Activated T-helper 2 cell treated with anti-CD3 and anti-CD28 coated beads, Interferon-gamma antibody, Interleukin-2, Interleukin-4, amounts not matched to agents 10 μg/mL and 5 μg/mL and 100 μg/mL, durations not matched to agents 14 hours and 24 hours and 36 hours (primary cell): ENCODE measurements at regions of chr18 and their contacts with region 1.

Region 1: DNA sequence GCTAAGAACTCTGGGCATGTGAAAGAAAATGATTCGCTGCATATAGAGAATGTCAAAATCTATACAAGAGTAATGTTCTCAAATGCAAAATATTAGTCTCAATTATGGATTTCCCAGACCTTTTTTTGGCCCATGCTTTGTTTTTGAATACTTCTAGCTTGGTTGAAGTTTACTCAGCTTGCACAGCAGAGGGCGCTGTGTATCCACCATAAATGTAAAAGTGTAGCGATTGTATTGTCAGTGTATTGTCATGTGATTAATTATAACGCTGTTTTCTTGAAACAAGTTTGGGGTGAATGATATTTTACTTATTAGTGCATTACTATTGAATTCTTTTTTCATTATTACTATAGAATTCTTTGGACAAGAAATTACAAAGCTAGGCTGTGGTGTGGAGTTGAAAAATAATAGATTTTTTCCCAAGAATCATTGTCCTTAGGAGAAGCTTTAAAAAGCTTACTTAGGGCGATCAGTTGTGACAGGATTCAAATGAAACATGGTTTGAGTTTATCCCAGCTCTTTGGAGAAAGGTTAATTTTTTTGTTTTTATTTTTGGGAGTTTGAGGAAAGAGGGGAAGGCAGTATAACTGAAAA is 98.3 kb downstream of the PIK3C3 start:
- DNase-seq: peak; percentile 32
- H3K4me3 Mint-ChIP-seq: no peak overlapping the region
- H3K27ac Mint-ChIP-seq: no peak overlapping the region
- H3K4me1 Mint-ChIP-seq: peaks cover 7% of the 10 kb centered on the region
- H3K27me3 Mint-ChIP-seq: no peaks in the 10 kb centered on the region

Region 2: DNA sequence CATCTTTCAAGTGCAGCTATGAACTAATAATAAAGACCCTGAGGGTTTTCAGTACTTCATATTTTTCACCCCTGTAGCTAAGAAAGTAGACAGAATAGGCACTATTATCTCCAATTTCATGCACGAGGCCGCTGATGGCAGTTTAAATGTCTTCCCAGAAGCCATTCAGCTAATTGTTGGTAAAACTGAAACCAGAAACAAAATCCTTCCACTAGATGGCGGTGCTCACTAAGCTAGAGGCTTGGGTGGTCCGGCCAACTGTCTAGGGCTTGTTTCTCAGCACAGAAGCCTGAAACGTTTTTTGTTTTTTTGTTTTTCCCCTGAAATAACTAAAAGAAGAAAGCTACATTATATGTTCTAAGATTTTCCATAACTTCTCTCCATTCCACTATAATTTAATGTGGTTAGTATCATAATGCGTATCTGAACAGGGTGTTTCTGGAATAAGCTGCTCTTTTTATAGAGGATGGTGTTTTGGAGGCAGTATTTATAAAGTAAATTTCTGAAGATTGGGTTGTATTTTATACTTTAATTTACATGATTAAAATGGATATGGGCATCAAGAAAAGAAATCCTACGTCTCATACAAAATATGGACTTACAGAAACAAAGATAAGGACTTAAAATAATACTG is 61.1 kb after region 1 on chr18:
- intact Hi-C with region 1: loop called (anchors 2 kb)
- DNase-seq: peak; percentile 34
- H3K4me3 Mint-ChIP-seq: no peak overlapping the region
- H3K27ac Mint-ChIP-seq: no peak overlapping the region
- H3K4me1 Mint-ChIP-seq: peaks cover 11% of the 10 kb centered on the region
- H3K27me3 Mint-ChIP-seq: peaks cover 14% of the 10 kb centered on the region

Region 3: DNA sequence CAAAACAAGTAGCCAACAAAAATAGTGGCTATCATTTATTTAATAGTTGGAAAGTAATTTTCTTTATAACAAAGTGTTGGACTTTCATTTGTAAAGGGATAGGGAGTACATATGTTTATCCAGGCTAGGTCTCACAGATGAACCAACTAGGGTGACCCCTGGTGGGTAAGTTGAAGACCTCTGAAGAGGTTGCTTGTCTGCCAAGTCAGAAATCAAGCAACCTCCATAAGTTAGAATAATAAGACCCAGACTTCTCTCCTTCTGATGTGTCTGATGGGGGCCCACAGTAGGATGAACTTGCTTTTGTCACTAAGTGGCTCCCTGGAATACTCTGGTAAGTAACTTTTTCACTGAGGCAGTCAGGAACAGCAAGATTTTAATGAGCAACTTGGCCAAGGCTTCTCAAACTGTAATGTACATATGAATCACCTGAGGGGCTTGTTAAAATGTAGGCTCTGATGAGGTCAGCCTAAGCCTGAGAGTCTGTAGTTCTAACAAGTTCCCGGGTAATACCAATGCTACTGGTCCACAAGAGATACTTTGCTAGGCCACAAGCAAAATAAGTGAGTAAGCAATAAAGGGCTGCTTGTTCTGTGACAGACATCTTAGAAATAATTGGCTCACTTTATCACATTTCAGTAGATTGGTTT is 221.3 kb after region 1 on chr18:
- intact Hi-C with region 1: loop called (anchors 5 kb)
- DNase-seq: no peak
- H3K4me3 Mint-ChIP-seq: no peak overlapping the region
- H3K27ac Mint-ChIP-seq: no peak overlapping the region
- H3K4me1 Mint-ChIP-seq: no peaks in the 10 kb centered on the region
- H3K27me3 Mint-ChIP-seq: no peaks in the 10 kb centered on the region